Activated naive CD4-positive, alpha-beta T cell treated with anti-CD3 and anti-CD28 coated beads for 36 hours (primary cell): ENCODE measurements at regions of chr11 and their contacts with region 1.

Region 1: DNA sequence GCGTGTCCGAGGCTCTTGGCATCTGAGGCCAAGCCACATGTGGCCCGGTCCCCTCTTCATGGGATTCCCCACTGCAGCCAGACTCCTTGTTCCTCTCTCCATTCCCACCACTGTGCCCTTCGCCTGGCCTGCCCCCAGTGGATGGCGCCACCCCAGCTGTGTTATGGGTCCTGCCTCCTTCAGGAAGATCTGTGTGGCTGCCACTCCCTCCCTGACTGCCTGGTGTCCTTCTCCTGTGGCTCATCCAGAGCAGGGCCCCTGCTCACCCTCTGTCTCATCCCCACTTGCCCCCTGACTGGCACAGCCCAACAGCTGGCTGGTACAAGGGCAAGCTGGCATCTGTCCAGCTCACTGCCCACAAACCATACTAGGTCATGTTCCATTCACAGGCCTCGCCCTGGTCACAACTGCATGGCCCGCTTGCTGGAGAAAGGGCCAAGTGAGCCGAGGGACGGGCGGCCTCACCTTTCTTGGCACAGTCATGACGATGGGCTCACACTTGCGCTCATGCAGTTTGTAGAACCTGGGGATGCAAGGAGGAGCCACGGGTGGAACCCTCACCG is 1.9 kb upstream of the PTPRCAP start:
- DNase-seq: peak; percentile 77
- H3K4me3 Mint-ChIP-seq: peak overlapping the region; percentile 90
- H3K27ac Mint-ChIP-seq: peak overlapping the region; percentile 95
- H3K4me1 Mint-ChIP-seq: peaks cover 55% of the 10 kb centered on the region
- H3K27me3 Mint-ChIP-seq: no peaks in the 10 kb centered on the region

Region 2: DNA sequence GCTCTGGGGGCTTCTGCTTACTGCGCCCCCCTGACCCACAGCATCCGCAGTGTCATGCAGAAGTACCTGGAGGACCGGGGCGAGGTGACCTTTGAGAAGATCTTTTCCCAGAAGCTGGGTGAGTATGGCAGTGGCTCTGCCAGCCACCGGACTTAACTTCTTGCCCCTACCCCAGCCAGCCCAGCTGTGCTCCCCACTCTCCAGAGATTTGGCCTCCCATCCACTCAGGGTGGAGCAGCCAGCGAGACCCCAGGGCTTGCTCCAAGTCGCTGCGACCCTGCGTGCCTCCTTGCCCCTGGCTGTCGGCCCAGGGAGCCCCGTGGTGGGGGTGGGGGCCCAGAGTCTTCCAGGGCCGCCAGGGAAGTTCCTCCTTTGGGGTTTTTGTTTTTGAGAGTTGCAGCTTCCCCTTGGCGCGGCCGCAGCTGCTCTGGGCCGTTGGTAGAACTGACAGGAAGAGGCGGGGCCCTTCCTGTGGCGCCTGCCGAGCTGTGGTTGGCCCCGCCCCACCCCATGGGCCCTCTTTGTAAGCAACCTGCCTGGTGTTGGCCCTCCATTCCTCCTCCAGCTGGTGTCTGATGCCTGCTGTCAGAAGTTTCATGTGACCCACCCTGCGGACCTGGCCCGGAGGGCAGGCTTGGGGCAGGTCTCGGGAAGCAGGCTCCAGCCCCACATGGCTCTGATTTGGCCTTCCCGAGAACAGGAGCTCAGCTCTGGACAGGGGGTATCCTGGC is 162.0 kb before region 1 on chr11:
- CTCF ChIA-PET with region 1: no interaction called
- intact Hi-C with region 1: no loop called
- DNase-seq: peak; percentile 95
- H3K4me3 Mint-ChIP-seq: peak overlapping the region; percentile 73
- H3K27ac Mint-ChIP-seq: peak overlapping the region; percentile 99
- H3K4me1 Mint-ChIP-seq: peaks cover 69% of the 10 kb centered on the region
- H3K27me3 Mint-ChIP-seq: no peaks in the 10 kb centered on the region

Region 3: DNA sequence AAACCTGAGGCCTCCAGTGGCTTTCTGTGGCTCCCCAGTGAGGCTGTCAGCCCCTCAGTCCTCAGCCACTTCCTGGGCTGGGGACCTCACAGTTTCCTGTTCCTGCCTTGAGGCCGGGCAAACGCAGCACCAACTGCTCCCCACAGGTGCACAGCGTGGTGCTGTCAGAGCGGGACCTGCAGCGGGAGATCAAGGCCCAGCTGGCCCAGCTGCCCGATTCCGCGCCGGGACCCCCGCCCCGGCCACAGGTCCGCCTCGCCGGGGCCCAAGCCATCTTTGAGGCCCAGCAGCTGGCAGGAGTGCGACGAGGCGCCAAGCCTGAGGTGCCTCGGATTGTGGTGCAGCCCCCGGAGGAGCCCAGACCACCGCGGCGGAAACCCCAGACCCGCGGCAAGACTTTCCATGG is 30.1 kb before region 1 on chr11:
- CTCF ChIA-PET with region 1: interaction called, 18 read pairs
- intact Hi-C with region 1: loop called (anchors 1 kb)
- DNase-seq: peak; percentile 87
- H3K4me3 Mint-ChIP-seq: peak overlapping the region; percentile 83
- H3K27ac Mint-ChIP-seq: peak overlapping the region; percentile 96
- H3K4me1 Mint-ChIP-seq: peaks cover 79% of the 10 kb centered on the region
- H3K27me3 Mint-ChIP-seq: no peaks in the 10 kb centered on the region

Region 4: GRCh38 chr11:67420646-67421420 is 18.6 kb before region 1 on chr11:
- CTCF ChIA-PET with region 1: interaction called, 3 read pairs
- intact Hi-C with region 1: loop called (anchors 2 kb)
- DNase-seq: peak; percentile 97
- H3K4me3 Mint-ChIP-seq: peak overlapping the region; percentile 77
- H3K27ac Mint-ChIP-seq: peak overlapping the region; percentile 50
- H3K4me1 Mint-ChIP-seq: peaks cover 46% of the 10 kb centered on the region
- H3K27me3 Mint-ChIP-seq: no peaks in the 10 kb centered on the region

Region 5: DNA sequence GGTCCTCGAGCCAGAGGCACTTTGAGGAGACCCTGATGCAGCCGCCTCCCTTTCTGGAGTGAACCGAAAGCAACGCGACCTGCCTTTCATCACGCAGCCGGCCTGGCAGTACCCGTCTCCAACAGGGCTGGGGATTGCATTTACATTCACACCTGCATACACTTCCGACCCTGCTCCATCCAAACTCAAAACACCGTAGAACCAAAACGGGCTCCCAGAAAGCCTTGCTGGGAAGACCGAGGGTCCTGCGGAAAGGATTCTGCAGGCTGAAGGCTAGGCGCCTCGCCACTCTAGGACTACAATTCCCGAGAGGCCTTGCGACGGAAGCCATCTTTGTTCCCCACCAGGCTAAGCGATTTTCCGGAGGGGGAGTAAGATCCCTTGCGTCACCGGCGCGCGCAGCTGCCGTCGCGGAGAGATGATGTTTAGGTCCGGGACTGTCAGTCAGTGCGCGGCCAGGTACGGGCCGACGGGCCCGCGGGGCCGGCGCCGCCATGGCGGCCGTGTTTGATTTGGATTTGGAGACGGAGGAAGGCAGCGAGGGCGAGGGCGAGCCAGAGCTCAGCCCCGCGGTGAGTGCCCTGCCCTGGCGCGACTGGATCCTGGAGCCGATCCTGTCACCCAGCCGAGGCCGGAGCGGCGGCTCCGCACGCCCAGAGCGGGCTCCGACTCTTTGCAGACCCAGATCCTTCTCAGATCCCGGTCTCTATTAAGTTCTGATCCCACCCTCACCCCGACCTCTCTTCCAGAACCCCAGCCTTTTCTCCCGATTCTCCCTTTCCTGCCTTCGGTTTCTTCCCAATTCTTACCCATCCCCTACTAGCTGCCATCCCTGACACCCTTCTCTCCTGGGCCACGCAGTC is 11.1 kb before region 1 on chr11 and contains the start of gene RPS6KB2:
- CTCF ChIA-PET with region 1: interaction called, 3 read pairs
- intact Hi-C with region 1: loop called (anchors 1 kb)
- DNase-seq: peak; percentile 100
- H3K4me3 Mint-ChIP-seq: peak within 1 kb of the TSS; percentile 98
- H3K27ac Mint-ChIP-seq: peak within 1 kb of the TSS; percentile 97
- H3K4me1 Mint-ChIP-seq: peaks cover 34% of the 10 kb centered on the region
- H3K27me3 Mint-ChIP-seq: no peaks in the 10 kb centered on the region
- total RNA-seq, gene RPS6KB2: 50.7 to 51.2 TPM

Region 6: DNA sequence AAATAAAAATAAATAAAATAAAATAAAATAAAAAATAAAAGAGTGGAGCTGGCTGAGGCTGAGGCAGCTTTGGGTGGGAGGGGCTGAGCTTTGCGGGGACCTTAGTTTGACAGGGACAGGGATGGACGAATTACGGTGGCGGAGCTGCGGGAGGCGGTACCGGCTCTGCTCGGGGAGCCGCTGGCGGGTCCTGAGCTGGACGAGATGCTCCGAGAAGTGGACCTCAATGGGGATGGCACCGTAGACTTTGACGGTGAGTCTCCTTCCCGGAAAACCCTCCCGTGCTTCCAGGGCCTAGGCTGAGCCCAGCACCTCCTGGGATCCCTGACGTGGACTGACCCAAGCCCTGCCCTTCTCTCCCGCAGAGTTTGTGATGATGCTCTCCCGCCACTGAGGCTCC is 18.9 kb after region 1 on chr11:
- CTCF ChIA-PET with region 1: no interaction called
- intact Hi-C with region 1: no loop called
- DNase-seq: no peak
- H3K4me3 Mint-ChIP-seq: no peak overlapping the region
- H3K27ac Mint-ChIP-seq: no peak overlapping the region
- H3K4me1 Mint-ChIP-seq: peaks cover 5% of the 10 kb centered on the region
- H3K27me3 Mint-ChIP-seq: no peaks in the 10 kb centered on the region

Region 7: GRCh38 chr11:67482825-67483798 is 43.7 kb after region 1 on chr11 and contains the start of gene AIP:
- CTCF ChIA-PET with region 1: no interaction called
- intact Hi-C with region 1: loop called (anchors 1 kb)
- DNase-seq: peak; percentile 99
- H3K4me3 Mint-ChIP-seq: peak within 1 kb of the TSS; percentile 94
- H3K27ac Mint-ChIP-seq: peak within 1 kb of the TSS; percentile 99
- H3K4me1 Mint-ChIP-seq: peaks cover 34% of the 10 kb centered on the region
- H3K27me3 Mint-ChIP-seq: no peaks in the 10 kb centered on the region
- total RNA-seq, gene AIP: 163 to 166 TPM

Region 8: GRCh38 chr11:67494371-67495287 is 55.2 kb after region 1 on chr11:
- CTCF ChIA-PET with region 1: no interaction called
- intact Hi-C with region 1: no loop called
- DNase-seq: no peak
- H3K4me3 Mint-ChIP-seq: no peak overlapping the region
- H3K27ac Mint-ChIP-seq: no peak overlapping the region
- H3K4me1 Mint-ChIP-seq: peaks cover 5% of the 10 kb centered on the region
- H3K27me3 Mint-ChIP-seq: no peaks in the 10 kb centered on the region

Region 9: DNA sequence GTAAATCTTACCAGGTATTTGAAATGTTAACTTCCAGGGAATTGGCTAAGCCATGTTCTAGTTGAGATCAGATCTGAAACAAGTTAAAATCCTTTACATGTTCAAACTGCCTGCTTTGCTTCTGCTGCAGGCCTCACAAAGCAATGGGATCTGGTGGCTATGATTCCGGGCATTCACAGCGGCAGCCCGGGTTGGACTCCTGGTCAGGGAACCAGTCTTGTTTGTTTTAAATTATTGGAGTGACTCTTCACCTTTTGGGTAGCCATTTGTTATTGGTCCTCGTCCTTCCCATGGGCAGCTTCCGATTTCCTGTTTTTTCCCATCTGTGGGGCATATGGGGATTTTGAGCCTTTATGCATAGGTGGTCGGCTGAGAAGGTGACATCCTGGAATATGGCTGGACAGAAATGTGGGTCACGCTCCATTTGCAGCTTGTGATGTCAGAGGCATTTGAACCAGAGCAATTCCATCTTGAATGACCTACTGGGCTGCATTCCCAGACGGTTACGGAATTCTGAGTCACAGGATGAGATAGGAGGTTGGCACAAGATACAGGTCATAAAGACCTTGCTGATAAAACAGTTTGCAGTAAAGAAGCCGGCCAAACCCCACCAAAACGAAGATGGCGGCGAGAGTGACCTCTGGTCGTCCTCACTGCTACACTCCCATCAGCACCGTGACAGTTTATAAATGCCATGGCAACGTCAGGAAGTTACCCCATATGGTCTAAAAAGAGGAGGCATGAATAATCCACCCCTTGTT is 124.1 kb after region 1 on chr11:
- CTCF ChIA-PET with region 1: no interaction called
- intact Hi-C with region 1: no loop called
- DNase-seq: no peak
- H3K4me3 Mint-ChIP-seq: no peak overlapping the region
- H3K27ac Mint-ChIP-seq: no peak overlapping the region
- H3K4me1 Mint-ChIP-seq: no peaks in the 10 kb centered on the region
- H3K27me3 Mint-ChIP-seq: no peaks in the 10 kb centered on the region